Dorsolateral prefrontal cortex (tissue), 120 donors: ENCODE measurements at regions of chr1 and their contacts with region 1.

Region 1: GRCh38 chr1:161314201-161314981 is at the start of gene SDHC:
- DNase-seq: peak; percentile 92 to 97 (median 94)
- H3K4me3 ChIP-seq: peak within 1 kb of the TSS; percentile 67 to 100 (median 92)
- H3K27ac ChIP-seq: peak within 1 kb of the TSS; percentile 89 to 100 (median 97)
- H3K27me3 ChIP-seq: no peaks in the 10 kb centered on the region
- CTCF ChIP-seq: peak in 24 of 56 donors; percentile 10 to 52 (median 23)
- total RNA-seq, gene SDHC: 139 to 247 (median 184) TPM

Region 2: GRCh38 chr1:160664573-160665051 is 649.8 kb before region 1 on chr1:
- intact Hi-C with region 1: no loop called
- DNase-seq: no peak
- H3K4me3 ChIP-seq: no peak overlapping the region
- H3K27ac ChIP-seq: no peak overlapping the region
- H3K27me3 ChIP-seq: peaks cover 0 to 16% (median 0%) of the 10 kb centered on the region in 45 donors
- CTCF ChIP-seq: no peak

Region 3: GRCh38 chr1:161201828-161202725 is 112.3 kb before region 1 on chr1 and contains the start of gene NDUFS2:
- intact Hi-C with region 1: loop called in 1 of 2 experiments (anchors 5 kb)
- DNase-seq: peak; percentile 96 to 100 (median 99)
- H3K4me3 ChIP-seq: peak within 1 kb of the TSS; percentile 51 to 98 (median 88)
- H3K27ac ChIP-seq: peak within 1 kb of the TSS; percentile 90 to 100 (median 99)
- H3K27me3 ChIP-seq: no peaks in the 10 kb centered on the region
- CTCF ChIP-seq: peak in 49 of 56 donors; percentile 5 to 71 (median 42)
- total RNA-seq, gene NDUFS2: 77.0 to 176 (median 131) TPM

Region 4: GRCh38 chr1:161367684-161368400 is 53.5 kb after region 1 on chr1 and contains the start of gene CFAP126:
- intact Hi-C with region 1: loop called in 1 of 2 experiments (anchors 5 kb)
- DNase-seq: peak in 8 of 10 donors; percentile 53 to 77 (median 60)
- H3K4me3 ChIP-seq: peak within 1 kb of the TSS in 1 of 59 donors; percentile 21
- H3K27ac ChIP-seq: peak within 1 kb of the TSS in 50 of 59 donors; percentile 0 to 84 (median 61)
- H3K27me3 ChIP-seq: no peaks in the 10 kb centered on the region
- CTCF ChIP-seq: peak in 49 of 56 donors; percentile 13 to 68 (median 39)
- total RNA-seq, gene CFAP126: 0.55 to 7.3 (median 1.5) TPM in 84 of 120 experiments, not detected in the others

Region 5: DNA sequence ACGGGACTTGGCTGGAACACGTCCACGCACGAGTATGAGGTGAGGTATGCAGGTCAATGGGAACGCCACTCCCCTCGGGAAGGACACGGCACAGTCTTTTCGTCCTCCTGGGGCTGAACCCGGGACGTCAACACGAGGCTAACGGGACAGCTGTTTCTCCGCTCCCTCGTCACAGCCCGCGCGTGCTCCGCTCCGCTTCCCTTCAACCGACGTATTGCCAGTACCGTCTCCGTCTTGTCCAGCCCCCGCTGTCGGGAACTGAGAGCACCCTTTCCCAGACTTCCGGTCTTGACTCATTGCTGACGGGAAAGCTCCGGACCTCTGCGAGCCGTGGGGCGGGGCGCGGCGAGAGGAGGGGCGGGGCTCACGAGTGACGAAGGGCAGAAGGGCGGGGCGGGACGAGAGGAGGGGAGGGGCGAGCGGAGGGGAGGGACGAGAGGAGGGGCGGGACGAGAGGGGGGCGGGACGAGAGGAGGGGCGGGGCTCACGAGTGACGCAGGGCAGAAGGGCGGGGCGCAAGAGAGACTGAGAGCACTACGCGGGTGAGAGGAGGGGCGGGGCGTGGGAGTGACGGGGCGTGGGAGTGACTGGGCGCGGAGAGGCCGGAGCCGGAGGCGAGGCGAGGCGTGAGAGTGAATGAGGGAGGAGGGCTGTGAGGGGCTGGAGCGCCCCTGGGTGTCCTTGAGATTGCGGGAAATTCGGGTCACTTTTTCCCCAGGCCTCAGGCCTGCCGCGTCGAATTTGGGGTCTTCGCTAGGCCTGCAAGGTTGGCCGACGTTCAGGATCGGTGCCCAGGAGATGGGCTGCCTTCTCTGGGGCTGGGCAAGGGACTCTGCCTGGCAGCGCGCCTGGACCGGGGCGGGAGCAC is 75.5 kb after region 1 on chr1:
- intact Hi-C with region 1: loop called in 1 of 2 experiments (anchors 5 kb)
- DNase-seq: peak; percentile 95 to 99 (median 97)
- H3K4me3 ChIP-seq: peak overlapping the region; percentile 58 to 96 (median 83)
- H3K27ac ChIP-seq: peak overlapping the region; percentile 58 to 99 (median 94)
- H3K27me3 ChIP-seq: no peaks in the 10 kb centered on the region
- CTCF ChIP-seq: peak in 9 of 56 donors; percentile 1 to 25 (median 15)